ENCODE measurements at regions of chr4 and their contacts with region 1.

Region 1: GRCh38 chr4:169270810-169271691 is at the start of gene SH3RF1:
- DNase-seq: peak; percentile 83
- ATAC-seq: peak; percentile 73
- H3K4me3 ChIP-seq: peak within 1 kb of the TSS; percentile 87
- H3K27ac ChIP-seq: peak within 1 kb of the TSS; percentile 72
- H3K4me1 ChIP-seq: peaks cover 30% of the 10 kb centered on the region
- H3K27me3 ChIP-seq: no peaks in the 10 kb centered on the region
- CTCF ChIP-seq: no peak; the same call in 1 of the 2 replicates
- total RNA-seq, gene SH3RF1: 20.2 and 21.0 TPM in 2 replicates

Region 2: DNA sequence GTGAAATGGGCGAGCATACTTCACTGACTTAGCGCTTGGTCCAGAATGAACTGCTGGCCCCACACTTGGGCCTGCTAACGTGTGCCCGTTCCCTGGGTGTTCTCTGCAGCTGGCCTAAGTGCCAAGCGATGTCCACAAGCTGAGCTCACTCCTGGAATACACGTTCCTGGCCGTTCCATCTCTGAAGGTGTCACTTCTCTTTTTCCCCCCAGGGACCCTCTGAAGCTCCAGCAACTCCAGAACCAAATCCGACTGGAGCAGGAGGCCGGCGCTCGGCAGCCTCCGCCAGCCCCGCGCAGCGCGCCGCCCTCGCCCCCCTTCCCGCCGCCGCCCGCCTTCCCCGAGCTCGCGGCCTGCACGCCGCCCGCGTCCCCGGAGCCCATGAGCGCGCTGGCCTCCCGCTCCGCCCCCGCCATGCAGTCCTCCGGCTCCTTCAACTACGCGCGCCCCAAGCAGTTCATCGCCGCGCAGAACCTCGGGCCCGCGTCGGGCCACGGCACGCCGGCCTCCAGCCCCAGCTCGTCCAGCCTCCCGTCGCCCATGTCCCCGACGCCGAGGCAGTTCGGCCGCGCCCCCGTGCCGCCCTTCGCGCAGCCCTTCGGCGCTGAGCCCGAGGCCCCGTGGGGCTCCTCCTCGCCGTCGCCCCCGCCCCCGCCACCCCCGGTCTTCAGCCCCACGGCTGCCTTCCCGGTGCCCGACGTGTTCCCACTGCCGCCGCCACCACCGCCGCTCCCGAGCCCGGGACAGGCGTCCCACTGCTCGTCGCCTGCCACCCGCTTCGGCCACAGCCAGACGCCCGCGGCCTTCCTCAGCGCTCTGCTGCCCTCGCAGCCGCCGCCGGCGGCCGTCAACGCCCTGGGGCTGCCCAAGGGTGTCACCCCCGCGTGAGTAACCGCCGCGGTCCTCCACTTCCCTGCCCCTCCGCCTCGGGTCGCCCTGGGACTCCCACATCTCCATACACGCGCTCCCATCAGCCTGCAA is 393.2 kb before region 1 on chr4:
- CTCF ChIA-PET with region 1: no interaction called
- POLR2A ChIA-PET with region 1: no interaction called
- intact Hi-C with region 1: no loop called
- DNase-seq: no peak
- ATAC-seq: no peak
- H3K4me3 ChIP-seq: no peak overlapping the region
- H3K27ac ChIP-seq: no peak overlapping the region
- H3K4me1 ChIP-seq: no peaks in the 10 kb centered on the region
- H3K27me3 ChIP-seq: no peaks in the 10 kb centered on the region
- CTCF ChIP-seq: no peak

Region 3: GRCh38 chr4:169010125-169011023 is 260.7 kb before region 1 on chr4 and contains the start of gene CBR4:
- CTCF ChIA-PET with region 1: interaction called, 5 read pairs
- POLR2A ChIA-PET with region 1: no interaction called
- intact Hi-C with region 1: loop called (anchors 5 kb)
- DNase-seq: peak; percentile 95
- ATAC-seq: peak; percentile 75
- H3K4me3 ChIP-seq: peak within 1 kb of the TSS; percentile 87
- H3K27ac ChIP-seq: peak within 1 kb of the TSS; percentile 98
- H3K4me1 ChIP-seq: peaks cover 84% of the 10 kb centered on the region
- H3K27me3 ChIP-seq: no peaks in the 10 kb centered on the region
- CTCF ChIP-seq: no peak; the same call in 1 of the 2 replicates
- total RNA-seq, gene CBR4: 7.4 and 12.6 TPM in 2 replicates

Region 4: DNA sequence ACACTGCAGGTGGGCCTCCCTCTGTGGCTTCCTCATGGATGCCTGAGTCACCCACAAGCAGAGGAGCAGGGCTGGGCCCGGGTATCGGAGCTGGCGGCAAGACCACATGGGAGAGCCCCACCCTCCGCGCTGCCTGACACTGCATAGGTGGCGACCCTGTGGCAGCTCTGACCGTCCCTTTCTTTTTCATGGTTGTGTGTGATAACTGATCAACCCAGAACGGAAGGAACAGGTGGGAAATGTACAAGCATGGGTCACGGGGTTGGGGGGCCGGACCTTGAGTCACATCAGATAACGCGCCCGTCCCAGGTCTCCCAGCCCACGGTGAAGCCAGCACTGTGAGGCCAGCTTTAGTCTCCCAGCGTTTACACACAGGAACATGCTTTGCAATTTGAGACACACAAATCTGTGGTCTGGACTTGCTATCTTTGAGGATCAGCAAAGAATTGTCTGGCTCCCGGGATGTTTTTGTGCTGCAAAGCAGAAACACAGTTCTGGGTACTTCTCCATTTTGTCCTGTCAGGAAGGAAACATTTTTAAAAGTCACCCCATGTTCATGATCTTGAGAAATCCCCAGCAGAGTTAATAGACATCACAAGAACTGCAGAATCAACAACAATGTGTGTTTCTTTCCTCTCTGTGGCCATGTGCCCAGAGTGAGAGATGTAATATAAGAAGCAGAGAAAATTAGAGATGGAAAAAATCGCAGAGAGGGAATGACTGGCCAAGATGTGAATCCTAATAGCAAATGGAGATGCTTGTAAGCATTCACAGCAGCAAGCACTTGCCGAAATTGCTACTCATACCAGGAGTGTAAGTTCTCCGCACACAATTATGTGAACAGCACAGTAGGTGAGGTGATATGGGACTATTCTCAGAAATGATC is 190.9 kb before region 1 on chr4:
- CTCF ChIA-PET with region 1: no interaction called
- POLR2A ChIA-PET with region 1: no interaction called
- intact Hi-C with region 1: loop called (anchors 5 kb)
- DNase-seq: peak; percentile 76
- ATAC-seq: peak; percentile 88
- H3K4me3 ChIP-seq: peak overlapping the region; percentile 54
- H3K27ac ChIP-seq: peak overlapping the region; percentile 91
- H3K4me1 ChIP-seq: peaks cover 23% of the 10 kb centered on the region
- H3K27me3 ChIP-seq: no peaks in the 10 kb centered on the region
- CTCF ChIP-seq: no peak

Region 5: DNA sequence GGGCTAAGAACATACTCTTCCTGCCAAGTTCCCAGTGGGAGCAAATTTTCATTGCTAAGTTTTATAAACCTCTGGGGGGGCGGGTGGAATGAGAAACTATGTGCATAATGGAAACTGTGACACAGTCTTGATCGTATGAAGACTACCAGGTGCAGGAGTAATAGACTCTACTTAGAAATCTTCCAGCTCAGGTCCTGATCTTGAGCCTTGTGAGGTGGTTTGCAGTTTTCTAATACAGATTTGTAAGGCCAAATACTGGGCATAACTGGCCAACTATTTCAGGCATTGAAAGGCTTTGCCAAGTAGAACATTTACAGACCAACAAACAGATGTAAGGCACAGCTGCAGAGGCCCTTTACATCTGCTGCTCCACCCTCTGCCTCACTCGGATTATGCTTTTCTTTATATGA is 171.3 kb before region 1 on chr4:
- CTCF ChIA-PET with region 1: no interaction called
- POLR2A ChIA-PET with region 1: no interaction called
- intact Hi-C with region 1: no loop called
- DNase-seq: no peak
- ATAC-seq: no peak
- H3K4me3 ChIP-seq: no peak overlapping the region
- H3K27ac ChIP-seq: no peak overlapping the region
- H3K4me1 ChIP-seq: peaks cover 16% of the 10 kb centered on the region
- H3K27me3 ChIP-seq: no peaks in the 10 kb centered on the region
- CTCF ChIP-seq: no peak

Region 6: GRCh38 chr4:169184236-169184635 is 86.8 kb before region 1 on chr4:
- CTCF ChIA-PET with region 1: no interaction called
- POLR2A ChIA-PET with region 1: interaction called, 11 read pairs
- intact Hi-C with region 1: no loop called
- DNase-seq: no peak
- ATAC-seq: no peak
- H3K4me3 ChIP-seq: no peak overlapping the region
- H3K27ac ChIP-seq: no peak overlapping the region
- H3K4me1 ChIP-seq: peaks cover 7% of the 10 kb centered on the region; the same call in 1 of the 2 replicates
- H3K27me3 ChIP-seq: no peaks in the 10 kb centered on the region
- CTCF ChIP-seq: no peak

Region 7: DNA sequence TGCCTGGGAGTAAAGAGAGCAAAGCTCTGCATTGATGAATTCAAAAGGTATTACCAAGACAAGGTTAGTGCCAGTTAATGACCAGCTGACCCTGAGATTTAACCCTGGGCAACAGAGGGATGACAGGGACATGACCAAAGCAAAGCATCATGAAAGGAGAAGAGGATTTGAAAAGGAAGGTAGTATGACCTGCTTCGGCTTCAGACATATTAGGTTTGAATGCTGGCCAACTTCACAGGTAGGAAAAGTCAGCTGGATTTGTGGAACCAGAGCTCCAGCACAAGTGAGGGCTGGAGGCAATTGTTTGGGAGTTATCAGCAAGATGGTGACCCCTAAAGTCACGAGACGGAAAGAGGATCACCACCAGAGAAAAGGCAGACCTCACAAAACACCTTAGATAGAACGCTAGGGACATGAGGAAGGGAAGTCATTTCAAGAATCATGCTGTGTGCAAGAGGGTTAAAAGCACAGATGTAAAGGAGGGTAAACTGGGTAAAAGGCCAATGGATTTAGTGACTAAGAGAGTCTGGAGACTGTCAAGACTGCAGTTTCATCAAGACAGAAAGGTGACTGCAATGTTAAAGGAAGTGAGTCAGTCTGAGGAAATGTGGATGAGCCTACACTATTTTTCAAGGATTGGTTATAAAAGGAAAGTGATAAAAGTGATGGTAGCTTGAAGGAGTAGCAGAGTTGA is 45.8 kb before region 1 on chr4:
- CTCF ChIA-PET with region 1: no interaction called
- POLR2A ChIA-PET with region 1: no interaction called
- intact Hi-C with region 1: loop called (anchors 1 kb)
- DNase-seq: peak; percentile 90
- ATAC-seq: peak; percentile 84
- H3K4me3 ChIP-seq: peak overlapping the region; percentile 52
- H3K27ac ChIP-seq: peak overlapping the region; percentile 99
- H3K4me1 ChIP-seq: peaks cover 49% of the 10 kb centered on the region
- H3K27me3 ChIP-seq: no peaks in the 10 kb centered on the region
- CTCF ChIP-seq: no peak

Region 8: GRCh38 chr4:169345194-169345787 is 74.2 kb after region 1 on chr4:
- CTCF ChIA-PET with region 1: no interaction called
- POLR2A ChIA-PET with region 1: no interaction called
- intact Hi-C with region 1: loop called (anchors 10 kb)
- DNase-seq: peak; percentile 90
- ATAC-seq: peak; percentile 85
- H3K4me3 ChIP-seq: 0 out of 2 replicates have a peak overlapping the region, but pooled peaks have one; percentile 34
- H3K27ac ChIP-seq: peak overlapping the region; percentile 98
- H3K4me1 ChIP-seq: peaks cover 37% of the 10 kb centered on the region
- H3K27me3 ChIP-seq: no peaks in the 10 kb centered on the region
- CTCF ChIP-seq: no peak

Region 9: GRCh38 chr4:169593050-169593560 is 322.1 kb after region 1 on chr4:
- CTCF ChIA-PET with region 1: no interaction called
- POLR2A ChIA-PET with region 1: no interaction called
- intact Hi-C with region 1: no loop called
- DNase-seq: no peak
- ATAC-seq: no peak
- H3K4me3 ChIP-seq: no peak overlapping the region
- H3K27ac ChIP-seq: no peak overlapping the region
- H3K4me1 ChIP-seq: no peaks in the 10 kb centered on the region
- H3K27me3 ChIP-seq: no peaks in the 10 kb centered on the region
- CTCF ChIP-seq: no peak

Region 10: DNA sequence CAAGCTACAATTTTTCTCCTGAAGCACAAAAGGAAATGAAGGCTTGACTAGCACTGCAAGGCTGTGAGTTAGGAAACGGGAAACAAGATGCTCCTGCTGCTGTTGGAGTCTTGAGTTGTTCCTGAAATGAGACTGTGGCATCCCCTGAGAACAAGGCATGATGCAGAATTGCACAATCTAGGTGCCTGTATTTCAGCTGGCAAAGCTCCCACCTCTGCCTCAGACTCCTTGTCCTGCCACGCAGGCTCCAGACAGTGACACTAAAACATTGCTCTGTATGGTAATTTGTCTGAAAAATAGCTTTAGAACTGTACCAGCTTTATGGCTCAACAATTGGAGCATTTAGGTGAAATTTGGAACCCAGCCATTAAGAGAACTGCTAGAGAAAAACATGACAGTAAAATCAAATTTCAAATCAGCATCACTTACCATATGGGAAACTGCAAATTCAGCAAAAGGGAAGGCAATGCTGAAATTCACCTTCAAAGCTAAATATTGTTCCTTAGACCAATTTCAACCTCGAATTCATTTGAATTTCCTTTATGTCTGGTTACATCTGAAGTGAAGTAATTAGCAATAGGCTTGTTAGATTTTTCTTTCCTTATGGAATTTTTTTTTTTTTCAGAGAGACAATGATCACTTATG is 651.7 kb after region 1 on chr4:
- CTCF ChIA-PET with region 1: no interaction called
- POLR2A ChIA-PET with region 1: no interaction called
- intact Hi-C with region 1: no loop called
- DNase-seq: no peak
- ATAC-seq: no peak
- H3K4me3 ChIP-seq: no peak overlapping the region
- H3K27ac ChIP-seq: no peak overlapping the region
- H3K4me1 ChIP-seq: no peaks in the 10 kb centered on the region
- H3K27me3 ChIP-seq: peaks cover 40% of the 10 kb centered on the region
- CTCF ChIP-seq: no peak